ENCODE measurements at regions of chr16 and their contacts with region 1.

Region 1: GRCh38 chr16:70267516-70267915 is 15.8 kb upstream of the EXOSC6 start:
- DNase-seq: peak in 1 of 2 experiments; percentile 69
- H3K4me3 ChIP-seq: no peak overlapping the region
- H3K27ac ChIP-seq: no peak overlapping the region
- H3K4me1 ChIP-seq: no peaks in the 10 kb centered on the region
- H3K27me3 ChIP-seq: no peaks in the 10 kb centered on the region
- CTCF ChIP-seq: peak; percentile 51 to 80 (median 58)
- EP300 ChIP-seq: no peak
- POLR2A ChIP-seq: no peak
- RAD21 ChIP-seq: peak; percentile 31 to 34

Region 2: GRCh38 chr16:70162041-70162451 is 105.5 kb before region 1 on chr16:
- CTCF ChIA-PET with region 1: interaction called, 11 read pairs
- POLR2A ChIA-PET with region 1: no interaction called
- DNase-seq: no peak
- H3K4me3 ChIP-seq: no peak overlapping the region
- H3K27ac ChIP-seq: no peak overlapping the region
- H3K4me1 ChIP-seq: no peaks in the 10 kb centered on the region
- H3K27me3 ChIP-seq: no peaks in the 10 kb centered on the region
- CTCF ChIP-seq: no peak
- EP300 ChIP-seq: no peak
- POLR2A ChIP-seq: no peak
- RAD21 ChIP-seq: no peak

Region 3: GRCh38 chr16:70289229-70290098 is 21.9 kb after region 1 on chr16 and contains the start of gene AARS1:
- CTCF ChIA-PET with region 1: interaction called, 24 read pairs
- POLR2A ChIA-PET with region 1: interaction called, 414 read pairs
- DNase-seq: peak; percentile 96 to 98
- H3K4me3 ChIP-seq: peak within 1 kb of the TSS; percentile 84 to 96 (median 92)
- H3K27ac ChIP-seq: peak within 1 kb of the TSS; percentile 97
- H3K4me1 ChIP-seq: peaks cover 0 to 3% (median 0%) of the 10 kb centered on the region in 4 experiments; a peak in 3 of 7 replicates
- H3K27me3 ChIP-seq: no peaks in the 10 kb centered on the region
- CTCF ChIP-seq: no peak
- EP300 ChIP-seq: peak in 1 of 2 experiments; percentile 43; a peak in 1 of 3 replicates
- POLR2A ChIP-seq: peak; percentile 97
- RAD21 ChIP-seq: no peak
- total RNA-seq, gene AARS1: 231 and 235 TPM in 2 replicates

Measured in H1 (cell line).